Esophagus squamous epithelium (tissue), 5 donors: ENCODE measurements at regions of chr16 and their contacts with region 1.

Region 1: GRCh38 chr16:9008601-9009260 is 45.0 kb upstream of the USP7 start:
- DNase-seq: no peak
- H3K4me3 ChIP-seq: peak overlapping the region; percentile 10 to 56 (median 30)
- H3K27ac ChIP-seq: peak overlapping the region in 1 of 4 donors; percentile 18
- H3K4me1 ChIP-seq: peaks cover 4 to 27% (median 8%) of the 10 kb centered on the region in 3 donors
- H3K27me3 ChIP-seq: peaks cover 0 to 20% (median 0%) of the 10 kb centered on the region in 4 donors
- CTCF ChIP-seq: peak; percentile 64 to 89 (median 80)
- POLR2A ChIP-seq: no peak

Region 2: GRCh38 chr16:8919934-8920462 is 88.7 kb before region 1 on chr16:
- intact Hi-C with region 1: loop called (anchors 10 kb)
- DNase-seq: no peak
- H3K4me3 ChIP-seq: no peak overlapping the region
- H3K27ac ChIP-seq: no peak overlapping the region
- H3K4me1 ChIP-seq: peaks cover 0 to 30% (median 3%) of the 10 kb centered on the region in 3 donors
- H3K27me3 ChIP-seq: no peaks in the 10 kb centered on the region
- CTCF ChIP-seq: no peak
- POLR2A ChIP-seq: no peak

Region 3: DNA sequence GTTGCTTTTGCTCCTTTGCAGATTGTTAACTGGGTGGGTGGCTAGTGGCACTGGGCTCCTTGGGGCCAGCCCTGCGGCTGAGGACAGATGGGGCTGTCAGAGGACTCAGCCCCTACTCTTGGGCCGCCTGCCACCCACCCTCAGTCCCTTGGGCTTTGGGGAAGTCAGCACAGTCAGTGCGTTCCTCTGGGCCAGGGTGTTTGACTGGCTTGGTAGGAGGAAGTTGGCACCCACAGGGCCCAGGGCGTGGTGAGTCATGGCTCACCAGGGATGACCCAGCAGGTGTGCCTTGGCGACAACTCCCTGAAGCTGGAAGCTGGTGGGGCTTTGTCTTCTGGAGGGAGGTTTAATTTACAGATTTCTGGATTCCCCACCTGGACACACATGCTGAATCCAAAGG is 115.1 kb after region 1 on chr16:
- intact Hi-C with region 1: loop called (anchors 10 kb)
- DNase-seq: no peak
- H3K4me3 ChIP-seq: no peak overlapping the region
- H3K27ac ChIP-seq: peak overlapping the region; percentile 24 to 76 (median 61)
- H3K4me1 ChIP-seq: peaks cover 31 to 85% (median 42%) of the 10 kb centered on the region in 3 donors
- H3K27me3 ChIP-seq: no peaks in the 10 kb centered on the region
- CTCF ChIP-seq: no peak
- POLR2A ChIP-seq: no peak